T-cell (primary cell): ENCODE measurements at regions of chr15 and their contacts with region 1.

Region 1: GRCh38 chr15:77543159-77543882 is 89.4 kb downstream of the LINGO1 start:
- DNase-seq: peak; percentile 41 to 81 (median 64)
- ATAC-seq: peak; percentile 88 to 95 (median 92)
- H3K4me3 ChIP-seq: peak overlapping the region; percentile 72 to 89
- H3K4me3 Mint-ChIP-seq: peak overlapping the region; percentile 73 to 78 (median 75)
- H3K27ac ChIP-seq: no peak overlapping the region
- H3K27ac Mint-ChIP-seq: peak overlapping the region in 1 of 2 donors; percentile 68
- H3K4me1 ChIP-seq: peaks cover 0 to 15% of the 10 kb centered on the region in 2 experiments
- H3K4me1 Mint-ChIP-seq: peaks cover 10 to 13% (median 12%) of the 10 kb centered on the region in 3 donors
- H3K27me3 ChIP-seq: peaks cover 0 to 11% of the 10 kb centered on the region in 2 experiments
- H3K27me3 Mint-ChIP-seq: peaks cover 0 to 6% of the 10 kb centered on the region in 2 donors

Region 2: GRCh38 chr15:77118882-77119321 is 424.4 kb before region 1 on chr15:
- CTCF ChIA-PET with region 1: interaction called in 1 of 2 experiments, 23 read pairs
- POLR2A ChIA-PET with region 1: no interaction called
- DNase-seq: peak in 23 of 35 experiments; percentile 4 to 75 (median 24)
- ATAC-seq: peak in 3 of 4 experiments; percentile 43 to 70 (median 57)
- H3K4me3 ChIP-seq: no peak overlapping the region
- H3K4me3 Mint-ChIP-seq: no peak overlapping the region
- H3K27ac ChIP-seq: no peak overlapping the region
- H3K27ac Mint-ChIP-seq: no peak overlapping the region
- H3K4me1 ChIP-seq: peaks cover 0 to 3% of the 10 kb centered on the region in 2 experiments
- H3K4me1 Mint-ChIP-seq: peaks cover 5 to 10% (median 7%) of the 10 kb centered on the region in 3 donors
- H3K27me3 ChIP-seq: no peaks in the 10 kb centered on the region
- H3K27me3 Mint-ChIP-seq: no peaks in the 10 kb centered on the region

Region 3: GRCh38 chr15:77482570-77482969 is 60.8 kb before region 1 on chr15:
- CTCF ChIA-PET with region 1: no interaction called
- POLR2A ChIA-PET with region 1: no interaction called
- DNase-seq: no peak
- ATAC-seq: no peak
- H3K4me3 ChIP-seq: no peak overlapping the region
- H3K4me3 Mint-ChIP-seq: no peak overlapping the region
- H3K27ac ChIP-seq: no peak overlapping the region
- H3K27ac Mint-ChIP-seq: no peak overlapping the region
- H3K4me1 ChIP-seq: peaks cover 0 to 3% of the 10 kb centered on the region in 2 experiments
- H3K4me1 Mint-ChIP-seq: peaks cover 11 to 13% (median 12%) of the 10 kb centered on the region in 3 donors
- H3K27me3 ChIP-seq: no peaks in the 10 kb centered on the region
- H3K27me3 Mint-ChIP-seq: no peaks in the 10 kb centered on the region